SK-N-SH (cell line): ENCODE measurements at regions of chr17 and their contacts with region 1.

Region 1: DNA sequence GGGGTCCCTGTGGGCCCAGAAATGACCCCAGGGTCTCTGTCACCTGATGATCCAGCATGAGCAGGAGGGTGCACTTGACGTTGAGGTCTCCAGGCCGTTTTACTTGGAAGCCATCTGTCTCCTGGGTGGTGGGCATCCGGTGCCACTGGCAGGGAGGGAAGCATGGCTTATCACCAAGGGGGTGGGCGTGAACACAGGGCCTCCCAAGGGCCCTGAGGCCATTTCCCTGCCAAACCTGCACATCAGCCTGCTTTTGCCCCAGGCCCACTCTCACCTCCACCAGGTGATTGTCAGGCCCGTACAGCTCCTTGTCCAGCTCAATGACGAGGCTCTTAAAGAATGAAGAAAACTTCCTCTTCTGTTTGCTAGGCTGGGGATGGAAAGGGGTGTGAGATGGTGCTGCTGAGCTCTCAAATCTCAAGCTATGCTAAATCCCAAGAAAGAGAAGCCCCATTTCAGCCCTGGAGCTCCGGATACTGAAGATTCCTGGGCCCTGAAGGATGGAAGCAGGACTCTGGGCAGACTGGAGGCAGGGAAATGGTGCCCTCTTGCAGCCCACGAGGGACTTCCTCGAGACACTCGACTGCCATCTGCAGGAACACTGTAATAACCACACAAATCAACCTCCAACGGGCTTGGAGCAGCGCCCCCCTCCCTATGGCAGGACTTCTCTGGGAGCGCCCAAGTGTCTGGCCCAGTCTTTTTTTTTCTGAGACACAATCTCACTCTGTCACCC is 7.1 kb upstream of the FTSJ3 start:
- DNase-seq: peak; percentile 87
- H3K4me3 ChIP-seq: no peak overlapping the region
- H3K27ac ChIP-seq: peak overlapping the region; percentile 12 to 71; a peak in 3 of 4 replicates
- H3K4me1 ChIP-seq: peaks cover 11 to 29% of the 10 kb centered on the region in 2 experiments
- H3K27me3 ChIP-seq: no peaks in the 10 kb centered on the region
- CTCF ChIP-seq: peak; percentile 95
- EP300 ChIP-seq: peak in 1 of 2 experiments; percentile 15; a peak in 1 of 4 replicates
- RAD21 ChIP-seq: peak; percentile 77

Region 2: GRCh38 chr17:63809970-63810369 is 24.6 kb before region 1 on chr17:
- CTCF ChIA-PET with region 1: interaction called, 11 read pairs
- POLR2A ChIA-PET with region 1: no interaction called
- DNase-seq: no peak
- H3K4me3 ChIP-seq: no peak overlapping the region
- H3K27ac ChIP-seq: no peak overlapping the region
- H3K4me1 ChIP-seq: no peaks in the 10 kb centered on the region
- H3K27me3 ChIP-seq: no peaks in the 10 kb centered on the region
- CTCF ChIP-seq: no peak
- EP300 ChIP-seq: no peak
- RAD21 ChIP-seq: no peak

Region 3: GRCh38 chr17:63819585-63820537 is 14.7 kb before region 1 on chr17:
- CTCF ChIA-PET with region 1: interaction called, 27 read pairs
- POLR2A ChIA-PET with region 1: interaction called, 7 read pairs
- DNase-seq: no peak
- H3K4me3 ChIP-seq: no peak overlapping the region
- H3K27ac ChIP-seq: no peak overlapping the region
- H3K4me1 ChIP-seq: peaks cover 0 to 5% of the 10 kb centered on the region in 2 experiments; a peak in 1 of 4 replicates
- H3K27me3 ChIP-seq: no peaks in the 10 kb centered on the region
- CTCF ChIP-seq: no peak
- EP300 ChIP-seq: no peak
- RAD21 ChIP-seq: no peak

Region 4: GRCh38 chr17:63859257-63859656 is 24.7 kb after region 1 on chr17:
- CTCF ChIA-PET with region 1: interaction called, 11 read pairs
- POLR2A ChIA-PET with region 1: interaction called, 3 read pairs
- DNase-seq: no peak
- H3K4me3 ChIP-seq: no peak overlapping the region
- H3K27ac ChIP-seq: no peak overlapping the region
- H3K4me1 ChIP-seq: no peaks in the 10 kb centered on the region
- H3K27me3 ChIP-seq: peaks cover 31% of the 10 kb centered on the region
- CTCF ChIP-seq: no peak
- EP300 ChIP-seq: no peak
- RAD21 ChIP-seq: no peak

Region 5: GRCh38 chr17:63954402-63955063 is 119.9 kb after region 1 on chr17:
- CTCF ChIA-PET with region 1: no interaction called
- POLR2A ChIA-PET with region 1: no interaction called
- DNase-seq: peak; percentile 61
- H3K4me3 ChIP-seq: no peak overlapping the region
- H3K27ac ChIP-seq: no peak overlapping the region
- H3K4me1 ChIP-seq: peaks cover 0 to 13% of the 10 kb centered on the region in 2 experiments; a peak in 1 of 4 replicates
- H3K27me3 ChIP-seq: peaks cover 6% of the 10 kb centered on the region; the same call in 1 of the 2 replicates
- CTCF ChIP-seq: no peak
- EP300 ChIP-seq: no peak
- RAD21 ChIP-seq: no peak

Region 6: GRCh38 chr17:64073771-64074703 is 239.4 kb after region 1 on chr17:
- CTCF ChIA-PET with region 1: no interaction called
- POLR2A ChIA-PET with region 1: no interaction called
- DNase-seq: no peak
- H3K4me3 ChIP-seq: no peak overlapping the region
- H3K27ac ChIP-seq: no peak overlapping the region
- H3K4me1 ChIP-seq: no peaks in the 10 kb centered on the region
- H3K27me3 ChIP-seq: no peaks in the 10 kb centered on the region
- CTCF ChIP-seq: no peak
- EP300 ChIP-seq: no peak
- RAD21 ChIP-seq: no peak

Region 7: DNA sequence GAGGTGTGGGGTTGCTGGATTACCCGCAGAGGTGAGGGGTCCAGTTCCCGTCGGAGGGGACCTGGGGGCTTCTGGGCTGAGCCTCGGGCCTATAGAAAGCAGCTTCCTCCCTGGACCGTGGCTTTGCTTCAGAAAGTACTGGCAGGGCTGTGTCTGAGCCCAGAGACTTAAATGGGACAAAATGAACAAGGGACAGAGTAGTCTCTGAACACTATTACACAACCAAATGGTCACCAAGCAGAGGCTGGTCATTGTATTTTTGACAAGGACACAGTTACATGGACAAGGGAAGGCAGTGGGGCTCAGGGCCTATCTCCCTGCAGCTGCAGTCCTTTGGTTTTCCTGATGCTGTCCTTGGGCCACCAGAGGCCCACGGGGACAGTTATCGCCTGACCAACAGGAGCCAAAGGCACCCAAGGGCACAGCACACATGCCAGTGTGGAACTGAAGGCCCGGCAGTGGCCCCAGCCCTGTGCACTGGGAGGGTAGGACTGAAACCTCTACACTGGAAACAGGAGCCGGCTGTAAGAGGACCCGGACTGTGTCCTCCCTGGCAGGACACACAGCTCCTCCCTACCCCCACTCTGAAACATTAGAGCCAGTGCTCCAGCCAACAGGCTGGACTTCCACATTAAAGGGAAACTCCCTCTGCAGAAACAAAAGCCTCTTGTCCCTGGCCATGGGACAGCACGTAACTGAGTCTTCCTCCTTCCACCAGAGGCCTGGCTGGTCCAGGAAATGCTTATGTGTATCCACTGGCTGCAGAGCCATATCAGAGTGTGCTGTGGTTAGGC is 321.3 kb after region 1 on chr17:
- CTCF ChIA-PET with region 1: no interaction called
- POLR2A ChIA-PET with region 1: no interaction called
- DNase-seq: no peak
- H3K4me3 ChIP-seq: no peak overlapping the region
- H3K27ac ChIP-seq: peak overlapping the region in 1 of 2 experiments; percentile 72; a peak in 2 of 4 replicates
- H3K4me1 ChIP-seq: peaks cover 0 to 59% of the 10 kb centered on the region in 2 experiments; a peak in 2 of 4 replicates
- H3K27me3 ChIP-seq: no peaks in the 10 kb centered on the region
- CTCF ChIP-seq: no peak
- EP300 ChIP-seq: no peak
- RAD21 ChIP-seq: no peak